Mammary epithelial cell (primary cell): ENCODE measurements at regions of chr6 and their contacts with region 1.

Region 1: DNA sequence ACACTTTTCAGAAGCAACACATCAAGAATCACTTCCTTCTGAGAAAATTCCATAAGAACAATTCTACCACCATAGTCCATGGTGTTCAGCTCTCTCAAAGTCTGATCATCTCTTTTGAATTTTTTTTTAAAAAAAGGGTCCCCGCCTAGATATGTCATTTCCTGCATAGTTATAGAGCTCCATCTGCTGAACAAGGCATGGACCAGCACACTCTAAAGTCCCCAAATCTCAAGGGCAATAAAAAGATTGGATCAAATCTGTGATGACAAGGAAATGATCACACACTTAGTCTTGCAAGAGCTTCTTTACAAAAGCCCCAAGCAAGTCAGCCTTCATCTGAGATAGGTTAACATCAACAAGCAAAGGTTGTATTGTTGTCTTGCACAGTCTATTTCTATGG is 100.7 kb upstream of the STMND1 start:
- DNase-seq: no peak
- H3K4me3 ChIP-seq: no peak overlapping the region
- H3K27ac ChIP-seq: no peak overlapping the region
- H3K4me1 ChIP-seq: no peaks in the 10 kb centered on the region
- H3K27me3 ChIP-seq: peaks cover 8% of the 10 kb centered on the region
- CTCF ChIP-seq: peak in 1 of 2 donors; percentile 19

Region 2: GRCh38 chr6:16494793-16495192 is 506.4 kb before region 1 on chr6:
- CTCF ChIA-PET with region 1: no interaction called
- dilution Hi-C with region 1: no loop called
- in situ Hi-C with region 1: no loop called
- intact Hi-C with region 1: no loop called
- DNase-seq: peak; percentile 53
- H3K4me3 ChIP-seq: no peak overlapping the region
- H3K27ac ChIP-seq: no peak overlapping the region
- H3K4me1 ChIP-seq: peaks cover 15% of the 10 kb centered on the region
- H3K27me3 ChIP-seq: no peaks in the 10 kb centered on the region
- CTCF ChIP-seq: no peak

Region 3: DNA sequence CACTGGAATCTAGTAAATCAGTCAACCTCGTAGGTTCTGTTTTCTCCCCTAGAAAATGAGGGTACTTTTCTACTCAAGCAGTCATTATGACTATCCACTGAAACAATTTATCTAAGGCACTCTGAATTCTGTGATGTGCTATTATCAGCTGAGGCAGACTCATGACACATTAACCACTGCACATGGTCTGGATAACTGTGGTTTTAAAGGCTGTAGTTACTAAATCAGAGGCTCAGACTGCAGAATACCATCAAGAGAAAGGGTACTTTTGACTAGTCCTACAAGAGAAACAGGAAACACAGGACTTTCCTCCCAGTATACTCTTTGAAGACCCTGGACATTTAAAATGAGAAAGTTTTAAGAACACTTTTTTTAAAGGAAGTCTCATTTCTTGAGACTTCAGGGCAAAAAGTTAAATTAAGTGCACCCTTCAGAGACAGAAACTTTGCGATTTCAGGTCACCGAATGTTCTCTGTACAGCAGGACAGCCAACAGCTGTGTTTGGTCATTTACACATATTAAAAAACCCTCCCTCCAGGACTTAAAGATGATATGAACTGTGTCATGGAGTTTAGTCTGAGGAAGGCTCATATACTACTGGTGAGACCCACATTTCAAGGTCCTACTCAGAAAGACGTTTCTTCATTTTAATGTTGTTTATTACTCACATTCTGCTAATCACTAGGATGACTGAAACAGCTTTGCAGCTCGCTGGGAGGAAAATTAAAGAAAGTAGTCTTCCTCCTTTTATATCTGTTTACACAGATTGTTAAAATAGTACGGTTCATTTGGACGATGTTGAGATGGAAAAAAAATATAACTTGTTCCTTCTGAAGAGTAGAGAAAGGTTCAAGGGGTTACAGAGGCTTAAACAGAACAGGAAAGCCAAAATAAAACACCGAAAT is 259.8 kb before region 1 on chr6:
- CTCF ChIA-PET with region 1: no interaction called
- dilution Hi-C with region 1: no loop called
- in situ Hi-C with region 1: no loop called
- intact Hi-C with region 1: loop called (anchors 1 kb)
- DNase-seq: peak; percentile 94
- H3K4me3 ChIP-seq: no peak overlapping the region
- H3K27ac ChIP-seq: peak overlapping the region; percentile 55
- H3K4me1 ChIP-seq: peaks cover 53% of the 10 kb centered on the region
- H3K27me3 ChIP-seq: no peaks in the 10 kb centered on the region
- CTCF ChIP-seq: no peak

Region 4: DNA sequence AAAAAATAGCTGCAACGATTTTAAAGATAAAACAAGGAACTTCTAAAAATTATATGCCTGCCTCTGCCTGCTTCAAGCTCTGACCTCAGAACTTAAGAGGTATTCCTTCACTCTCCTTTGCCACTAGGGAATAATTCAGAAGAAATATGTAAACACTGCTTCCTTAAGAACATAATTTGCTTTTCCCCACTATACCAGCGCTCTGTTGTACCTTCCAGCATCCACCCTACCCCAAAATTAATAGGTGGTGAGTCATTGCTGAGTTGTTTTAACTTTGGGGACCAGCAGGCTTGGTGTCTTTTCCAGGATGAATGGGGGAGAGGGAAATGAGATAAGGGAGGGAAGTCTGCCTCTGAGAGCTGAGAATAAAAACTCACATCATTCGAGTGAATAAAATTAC is 132.2 kb before region 1 on chr6:
- CTCF ChIA-PET with region 1: no interaction called
- dilution Hi-C with region 1: no loop called
- in situ Hi-C with region 1: no loop called
- intact Hi-C with region 1: no loop called
- DNase-seq: no peak
- H3K4me3 ChIP-seq: no peak overlapping the region
- H3K27ac ChIP-seq: no peak overlapping the region
- H3K4me1 ChIP-seq: no peaks in the 10 kb centered on the region
- H3K27me3 ChIP-seq: no peaks in the 10 kb centered on the region
- CTCF ChIP-seq: no peak

Region 5: DNA sequence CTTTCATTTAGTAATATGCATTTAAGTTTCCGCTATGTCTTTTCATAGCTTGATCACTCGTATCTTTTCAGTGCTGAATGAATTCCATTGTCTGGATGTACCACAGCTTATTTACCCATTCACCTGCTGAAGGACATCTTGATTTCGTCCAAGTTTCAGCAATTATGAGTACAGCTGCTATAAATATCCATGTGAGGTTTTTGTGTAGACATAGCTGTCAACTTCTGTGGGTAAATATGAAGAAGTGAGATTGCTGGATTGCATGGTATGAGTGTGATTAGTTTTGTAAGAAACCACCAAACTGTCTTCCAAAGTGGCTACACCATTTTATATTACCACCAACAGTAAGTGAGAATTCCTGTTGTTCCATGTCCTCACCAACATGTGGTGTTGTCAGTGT is 21.4 kb after region 1 on chr6:
- CTCF ChIA-PET with region 1: no interaction called
- dilution Hi-C with region 1: no loop called
- in situ Hi-C with region 1: no loop called
- intact Hi-C with region 1: no loop called
- DNase-seq: no peak
- H3K4me3 ChIP-seq: no peak overlapping the region
- H3K27ac ChIP-seq: no peak overlapping the region
- H3K4me1 ChIP-seq: no peaks in the 10 kb centered on the region
- H3K27me3 ChIP-seq: no peaks in the 10 kb centered on the region
- CTCF ChIP-seq: no peak